ENCODE measurements at regions of chr10 and their contacts with region 1.

Region 1: GRCh38 chr10:87635610-87636312 is 23.9 kb upstream of the PAPSS2 start:
- DNase-seq: no peak
- ATAC-seq: no peak
- H3K4me3 ChIP-seq: no peak overlapping the region
- H3K27ac ChIP-seq: no peak overlapping the region
- H3K4me1 ChIP-seq: no peaks in the 10 kb centered on the region
- H3K27me3 ChIP-seq: no peaks in the 10 kb centered on the region
- CTCF ChIP-seq: no peak
- POLR2A ChIP-seq: no peak

Region 2: GRCh38 chr10:86775056-86775869 is 860.5 kb before region 1 on chr10:
- intact Hi-C with region 1: no loop called
- DNase-seq: no peak
- ATAC-seq: peak; percentile 12
- H3K4me3 ChIP-seq: no peak overlapping the region
- H3K27ac ChIP-seq: no peak overlapping the region
- H3K4me1 ChIP-seq: peaks cover 25% of the 10 kb centered on the region
- H3K27me3 ChIP-seq: no peaks in the 10 kb centered on the region
- CTCF ChIP-seq: no peak
- POLR2A ChIP-seq: no peak

Region 3: GRCh38 chr10:87547734-87548311 is 87.9 kb before region 1 on chr10:
- intact Hi-C with region 1: loop called (anchors 10 kb)
- DNase-seq: no peak
- ATAC-seq: peak; percentile 61
- H3K4me3 ChIP-seq: no peak overlapping the region
- H3K27ac ChIP-seq: peak overlapping the region in 2 of 4 donors; percentile 6 to 45
- H3K4me1 ChIP-seq: peaks cover 12% of the 10 kb centered on the region
- H3K27me3 ChIP-seq: no peaks in the 10 kb centered on the region
- CTCF ChIP-seq: no peak
- POLR2A ChIP-seq: no peak

Region 4: GRCh38 chr10:87578842-87579401 is 56.8 kb before region 1 on chr10:
- intact Hi-C with region 1: no loop called
- DNase-seq: peak in 1 of 4 donors; percentile 18
- ATAC-seq: no peak
- H3K4me3 ChIP-seq: no peak overlapping the region
- H3K27ac ChIP-seq: no peak overlapping the region
- H3K4me1 ChIP-seq: peaks cover 20% of the 10 kb centered on the region
- H3K27me3 ChIP-seq: no peaks in the 10 kb centered on the region
- CTCF ChIP-seq: no peak
- POLR2A ChIP-seq: no peak

Region 5: DNA sequence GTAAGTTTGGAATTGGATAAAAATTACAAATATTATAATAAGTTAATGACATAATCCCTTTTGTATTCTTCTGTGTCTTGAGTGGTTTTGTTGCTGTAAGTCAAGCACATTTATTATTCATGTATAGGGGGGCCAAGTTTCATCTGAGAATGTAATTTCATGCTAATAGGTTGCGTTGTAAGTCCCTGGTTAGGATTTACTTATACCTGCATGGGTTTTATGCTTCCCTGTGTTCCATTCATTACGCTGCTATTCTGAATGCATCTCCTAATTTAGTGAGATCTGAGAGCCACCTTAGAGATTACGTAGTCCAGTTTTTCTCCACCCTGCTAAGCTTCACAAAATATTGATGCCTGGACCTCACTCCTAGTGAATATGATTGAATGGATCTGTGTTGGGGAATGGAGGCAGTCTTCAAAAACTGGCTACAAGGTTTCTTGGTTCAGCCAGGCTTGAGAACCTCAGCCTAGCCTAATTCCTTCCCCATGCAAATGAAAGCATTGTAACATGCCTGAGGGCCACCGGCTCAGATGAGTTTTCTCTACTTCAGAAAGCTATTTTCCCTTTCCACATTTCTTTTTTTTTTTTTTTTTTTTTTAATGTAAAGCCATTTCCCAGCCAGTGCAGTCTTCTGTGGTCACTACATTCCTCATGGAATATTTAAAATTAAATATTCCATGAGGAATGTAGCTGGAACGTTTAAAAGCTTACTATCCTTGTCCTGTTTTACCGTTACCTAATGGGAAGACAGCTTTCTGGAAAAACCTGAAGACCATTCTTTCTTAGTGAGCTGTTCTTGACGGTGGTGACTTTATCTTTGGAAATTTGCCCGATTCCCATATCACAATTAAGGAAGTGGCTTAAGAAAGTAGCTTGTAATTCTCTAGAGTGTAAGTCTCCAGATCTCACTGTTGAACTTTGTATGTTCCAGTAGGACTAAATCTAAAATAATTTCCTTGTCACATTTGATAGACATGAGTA is 39.9 kb after region 1 on chr10:
- intact Hi-C with region 1: no loop called
- DNase-seq: no peak
- ATAC-seq: peak; percentile 42
- H3K4me3 ChIP-seq: no peak overlapping the region
- H3K27ac ChIP-seq: no peak overlapping the region
- H3K4me1 ChIP-seq: peaks cover 6% of the 10 kb centered on the region
- H3K27me3 ChIP-seq: no peaks in the 10 kb centered on the region
- CTCF ChIP-seq: no peak
- POLR2A ChIP-seq: no peak